ENCODE measurements at regions of chr1 and their contacts with region 1.

Region 1: DNA sequence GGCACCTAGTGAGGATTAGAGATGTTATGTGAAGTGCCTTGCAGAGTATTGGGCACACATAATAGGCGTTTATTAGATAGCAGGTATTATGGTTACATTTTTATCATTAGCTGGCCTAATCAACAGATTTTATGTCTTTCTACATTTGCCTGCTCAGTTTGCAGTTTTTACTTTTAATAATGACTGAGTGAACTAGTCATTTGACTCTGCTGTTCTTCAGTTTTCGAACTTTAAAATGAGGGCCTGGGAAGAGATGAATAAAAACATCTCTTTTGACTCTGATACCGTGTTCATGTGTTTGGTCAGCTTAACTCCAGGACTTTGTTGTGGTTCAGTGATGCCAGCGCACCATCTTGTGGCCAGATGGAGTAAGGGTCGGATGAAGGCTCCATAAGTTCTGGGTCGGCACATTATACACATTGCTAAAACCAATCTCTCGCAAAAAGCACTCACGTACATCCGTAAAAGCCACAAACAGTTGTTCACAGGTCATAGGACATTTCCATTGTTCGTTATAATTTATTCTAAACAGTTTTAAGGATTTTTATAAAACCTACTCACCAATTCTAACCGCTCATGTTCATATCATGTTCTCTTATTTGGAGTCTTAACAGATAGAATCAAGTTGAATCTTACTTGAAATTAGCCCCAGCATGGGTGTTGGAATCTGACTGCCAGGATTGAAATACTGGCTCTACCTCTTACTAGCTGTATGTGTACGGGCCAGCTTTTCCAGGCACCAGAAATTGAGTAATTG is 78.4 kb upstream of the GPR88 start:
- DNase-seq: peak; percentile 88
- H3K4me3 Mint-ChIP-seq: peak overlapping the region; percentile 17
- H3K27ac Mint-ChIP-seq: peak overlapping the region; percentile 73
- H3K4me1 Mint-ChIP-seq: peaks cover 58% of the 10 kb centered on the region
- H3K27me3 Mint-ChIP-seq: no peaks in the 10 kb centered on the region

Region 2: GRCh38 chr1:99590578-99591209 is 868.8 kb before region 1 on chr1:
- CTCF ChIA-PET with region 1: no interaction called
- POLR2A ChIA-PET with region 1: no interaction called
- intact Hi-C with region 1: no loop called
- DNase-seq: no peak
- H3K4me3 Mint-ChIP-seq: no peak overlapping the region
- H3K27ac Mint-ChIP-seq: no peak overlapping the region
- H3K4me1 Mint-ChIP-seq: no peaks in the 10 kb centered on the region
- H3K27me3 Mint-ChIP-seq: peaks cover 2% of the 10 kb centered on the region

Region 3: GRCh38 chr1:99808391-99809115 is 651.0 kb before region 1 on chr1:
- CTCF ChIA-PET with region 1: interaction called, 4 read pairs
- POLR2A ChIA-PET with region 1: no interaction called
- intact Hi-C with region 1: loop called (anchors 1 kb)
- DNase-seq: peak; percentile 22
- H3K4me3 Mint-ChIP-seq: peak overlapping the region; percentile 43
- H3K27ac Mint-ChIP-seq: no peak overlapping the region
- H3K4me1 Mint-ChIP-seq: peaks cover 14% of the 10 kb centered on the region
- H3K27me3 Mint-ChIP-seq: peaks cover 14% of the 10 kb centered on the region

Region 4: DNA sequence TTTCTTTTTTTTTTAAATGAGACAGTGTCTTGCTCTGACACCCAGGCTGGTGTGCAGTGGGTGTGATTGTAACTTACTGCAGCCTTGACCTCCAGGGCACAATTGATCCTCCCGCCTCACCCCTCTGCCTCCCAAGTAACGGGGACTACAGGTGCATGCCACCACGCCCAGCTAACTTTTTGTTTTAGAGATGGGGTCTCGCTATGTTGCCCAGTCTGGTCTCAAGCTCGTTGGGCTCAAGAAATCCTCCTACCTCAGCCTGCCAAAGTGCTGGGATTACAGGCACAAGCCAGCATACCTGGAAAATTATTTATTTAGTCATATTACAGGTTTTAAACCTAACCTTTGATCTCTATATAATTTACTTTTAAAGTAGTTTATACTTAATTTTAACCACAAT is 294.8 kb before region 1 on chr1:
- CTCF ChIA-PET with region 1: no interaction called
- POLR2A ChIA-PET with region 1: no interaction called
- intact Hi-C with region 1: no loop called
- DNase-seq: no peak
- H3K4me3 Mint-ChIP-seq: no peak overlapping the region
- H3K27ac Mint-ChIP-seq: no peak overlapping the region
- H3K4me1 Mint-ChIP-seq: no peaks in the 10 kb centered on the region
- H3K27me3 Mint-ChIP-seq: no peaks in the 10 kb centered on the region

Region 5: GRCh38 chr1:100229681-100230443 is 229.7 kb before region 1 on chr1:
- CTCF ChIA-PET with region 1: interaction called, 3 read pairs
- POLR2A ChIA-PET with region 1: no interaction called
- intact Hi-C with region 1: loop called (anchors 1 kb)
- DNase-seq: no peak
- H3K4me3 Mint-ChIP-seq: no peak overlapping the region
- H3K27ac Mint-ChIP-seq: no peak overlapping the region
- H3K4me1 Mint-ChIP-seq: peaks cover 20% of the 10 kb centered on the region
- H3K27me3 Mint-ChIP-seq: no peaks in the 10 kb centered on the region

Region 6: GRCh38 chr1:100299521-100300222 is 159.9 kb before region 1 on chr1:
- CTCF ChIA-PET with region 1: interaction called, 21 read pairs
- POLR2A ChIA-PET with region 1: no interaction called
- intact Hi-C with region 1: no loop called
- DNase-seq: peak; percentile 63
- H3K4me3 Mint-ChIP-seq: no peak overlapping the region
- H3K27ac Mint-ChIP-seq: no peak overlapping the region
- H3K4me1 Mint-ChIP-seq: peaks cover 12% of the 10 kb centered on the region
- H3K27me3 Mint-ChIP-seq: no peaks in the 10 kb centered on the region

Region 7: GRCh38 chr1:100387209-100387608 is 72.3 kb before region 1 on chr1:
- CTCF ChIA-PET with region 1: interaction called, 12 read pairs
- POLR2A ChIA-PET with region 1: no interaction called
- intact Hi-C with region 1: no loop called
- DNase-seq: no peak
- H3K4me3 Mint-ChIP-seq: peak overlapping the region; percentile 64
- H3K27ac Mint-ChIP-seq: peak overlapping the region; percentile 84
- H3K4me1 Mint-ChIP-seq: peaks cover 83% of the 10 kb centered on the region
- H3K27me3 Mint-ChIP-seq: no peaks in the 10 kb centered on the region

Region 8: GRCh38 chr1:100423832-100424337 is 35.7 kb before region 1 on chr1:
- CTCF ChIA-PET with region 1: interaction called, 21 read pairs
- POLR2A ChIA-PET with region 1: no interaction called
- intact Hi-C with region 1: no loop called
- DNase-seq: peak; percentile 33
- H3K4me3 Mint-ChIP-seq: peak overlapping the region; percentile 57
- H3K27ac Mint-ChIP-seq: peak overlapping the region; percentile 76
- H3K4me1 Mint-ChIP-seq: peaks cover 72% of the 10 kb centered on the region
- H3K27me3 Mint-ChIP-seq: no peaks in the 10 kb centered on the region

Region 9: DNA sequence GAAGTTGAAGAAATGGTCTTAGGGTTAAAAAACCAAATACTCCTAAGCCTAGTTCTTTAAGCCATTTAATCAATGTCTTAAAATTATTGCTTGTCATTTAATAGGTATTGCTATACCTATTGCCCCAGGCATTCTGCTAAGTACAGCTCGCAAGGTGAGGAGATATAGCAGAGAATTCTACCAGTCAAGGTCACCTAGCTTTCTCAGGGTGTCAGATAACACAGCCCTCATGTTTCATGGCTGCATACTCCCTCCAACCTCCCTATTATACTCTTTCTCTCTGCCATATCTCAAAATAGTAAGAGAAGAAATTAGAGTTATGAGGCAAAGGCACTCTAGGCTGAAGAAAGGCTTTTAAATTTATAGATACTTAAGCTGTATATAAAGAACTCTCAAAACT is 10.0 kb after region 1 on chr1:
- CTCF ChIA-PET with region 1: interaction called, 24 read pairs
- POLR2A ChIA-PET with region 1: no interaction called
- intact Hi-C with region 1: no loop called
- DNase-seq: no peak
- H3K4me3 Mint-ChIP-seq: no peak overlapping the region
- H3K27ac Mint-ChIP-seq: no peak overlapping the region
- H3K4me1 Mint-ChIP-seq: peaks cover 33% of the 10 kb centered on the region
- H3K27me3 Mint-ChIP-seq: no peaks in the 10 kb centered on the region

Region 10: DNA sequence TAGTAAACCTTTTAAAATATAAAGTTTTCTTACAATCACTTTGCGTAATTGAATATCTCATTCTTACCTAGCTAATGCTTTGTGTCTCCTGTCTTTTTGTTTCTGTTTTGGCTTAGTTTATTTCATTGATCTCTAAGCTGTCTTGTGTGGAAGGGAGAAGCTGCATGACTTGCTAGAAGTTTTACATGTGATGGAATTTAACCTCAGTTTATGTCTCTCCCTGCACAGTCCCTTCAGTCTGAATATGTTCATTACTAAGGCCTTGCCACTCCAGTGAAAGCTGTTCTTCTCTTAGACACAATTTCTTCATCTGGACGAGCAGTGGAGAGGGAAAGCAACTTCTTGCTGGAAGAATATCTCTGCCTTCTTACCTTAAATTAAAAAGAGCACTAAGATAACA is 58.5 kb after region 1 on chr1:
- CTCF ChIA-PET with region 1: no interaction called
- POLR2A ChIA-PET with region 1: no interaction called
- intact Hi-C with region 1: no loop called
- DNase-seq: no peak
- H3K4me3 Mint-ChIP-seq: no peak overlapping the region
- H3K27ac Mint-ChIP-seq: no peak overlapping the region
- H3K4me1 Mint-ChIP-seq: peaks cover 2% of the 10 kb centered on the region
- H3K27me3 Mint-ChIP-seq: no peaks in the 10 kb centered on the region

Measured in activated CD4-positive, alpha-beta memory T cell treated with anti-CD3 and anti-CD28 coated beads for 36 hours (primary cell).